PC-9 (cell line): ENCODE measurements at regions of chr11 and their contacts with region 1.

Region 1: DNA sequence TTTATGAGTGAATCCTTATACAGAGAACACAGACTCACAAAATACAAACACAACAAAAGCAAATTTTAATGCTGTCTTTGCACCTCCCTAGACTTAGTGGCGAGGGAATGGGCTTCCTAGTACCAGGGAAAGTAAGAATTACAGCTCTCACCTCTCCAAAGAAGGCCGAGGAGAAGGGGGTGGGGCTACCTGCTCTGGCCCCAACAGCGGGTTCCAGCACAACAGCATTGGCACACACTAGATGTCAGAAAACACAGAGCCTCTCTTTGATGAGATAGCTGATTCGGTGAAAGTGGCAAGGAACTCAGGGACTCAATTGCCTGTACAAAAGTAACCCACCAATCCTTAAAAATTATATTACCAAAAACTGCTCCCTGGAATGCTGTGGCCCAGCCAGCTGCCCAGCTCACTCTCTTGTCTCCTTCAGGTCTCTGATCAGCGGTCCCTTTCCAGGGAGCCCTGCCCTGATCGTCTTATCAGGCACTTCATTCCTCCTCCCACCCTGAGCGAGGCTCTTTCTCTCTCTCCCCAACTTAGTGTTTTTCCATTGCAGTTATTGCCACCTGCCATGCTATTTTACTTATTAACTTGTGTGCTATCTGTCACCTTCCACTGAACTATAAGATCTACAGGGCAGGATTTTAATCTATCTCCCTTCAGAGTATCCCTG is 30.7 kb downstream of the SPON1 start:
- DNase-seq: no peak
- H3K4me3 ChIP-seq: no peak overlapping the region
- H3K27ac ChIP-seq: no peak overlapping the region
- H3K4me1 ChIP-seq: peaks cover 17% of the 10 kb centered on the region
- H3K27me3 ChIP-seq: no peaks in the 10 kb centered on the region
- CTCF ChIP-seq: no peak

Region 2: GRCh38 chr11:14015476-14016110 is 22.4 kb after region 1 on chr11:
- CTCF ChIA-PET with region 1: no interaction called
- POLR2A ChIA-PET with region 1: no interaction called
- intact Hi-C with region 1: loop called (anchors 2 kb)
- DNase-seq: peak; percentile 49 to 90
- H3K4me3 ChIP-seq: no peak overlapping the region
- H3K27ac ChIP-seq: peak overlapping the region; percentile 75
- H3K4me1 ChIP-seq: peaks cover 27% of the 10 kb centered on the region
- H3K27me3 ChIP-seq: no peaks in the 10 kb centered on the region
- CTCF ChIP-seq: no peak